Activated naive CD4-positive, alpha-beta T cell treated with anti-CD3 and anti-CD28 coated beads, Interleukin-2, amount 10 ng/mL, durations not matched to agents 7 days and 5 days (primary cell): ENCODE measurements at regions of chr22 and their contacts with region 1.

Region 1: DNA sequence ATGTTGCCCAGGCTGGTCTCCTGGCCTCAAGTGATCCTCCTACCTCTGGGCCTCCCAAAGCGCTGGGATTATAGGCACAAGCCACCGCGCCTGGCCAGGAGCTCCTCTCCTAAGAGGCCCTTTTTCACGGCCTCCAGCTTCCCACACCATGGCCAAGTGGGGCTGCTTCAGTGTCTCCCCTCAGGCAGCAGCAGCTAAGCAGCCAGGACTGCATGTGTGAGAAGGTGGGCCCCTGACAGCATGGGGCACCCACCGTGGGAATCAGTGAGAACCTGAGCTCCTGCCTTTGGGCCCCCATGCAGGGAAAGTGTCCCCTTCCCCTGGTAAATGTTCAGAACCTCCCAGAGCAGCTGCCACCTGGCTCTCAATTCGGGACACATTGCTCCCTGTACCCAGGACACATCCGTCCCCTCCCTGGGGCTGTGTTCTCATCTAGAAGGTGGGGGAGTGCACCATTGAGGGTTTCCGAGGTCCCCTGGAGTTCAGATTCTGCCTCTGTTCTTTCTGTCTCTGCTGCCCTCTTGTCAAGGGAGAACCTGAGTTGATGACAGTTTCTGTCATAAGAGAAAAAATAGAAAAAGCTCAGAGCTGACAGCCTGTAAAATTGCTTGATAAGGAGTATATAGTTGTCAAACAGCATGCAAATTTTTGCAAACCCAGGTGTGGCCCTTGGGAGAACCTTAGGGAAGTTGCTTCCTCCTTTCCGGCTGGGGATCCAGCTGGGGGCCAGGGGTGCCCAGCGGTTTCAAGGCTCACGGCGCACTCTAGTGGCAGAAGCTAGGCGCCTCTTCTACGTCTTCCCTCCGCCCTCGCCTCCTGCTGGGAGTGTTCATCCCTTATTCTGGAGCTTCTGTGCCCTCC is 29.7 kb downstream of the FAM83F start:
- DNase-seq: peak; percentile 78
- H3K4me3 Mint-ChIP-seq: no peak overlapping the region
- H3K27ac Mint-ChIP-seq: no peak overlapping the region
- H3K4me1 Mint-ChIP-seq: no peaks in the 10 kb centered on the region
- H3K27me3 Mint-ChIP-seq: no peaks in the 10 kb centered on the region

Region 2: DNA sequence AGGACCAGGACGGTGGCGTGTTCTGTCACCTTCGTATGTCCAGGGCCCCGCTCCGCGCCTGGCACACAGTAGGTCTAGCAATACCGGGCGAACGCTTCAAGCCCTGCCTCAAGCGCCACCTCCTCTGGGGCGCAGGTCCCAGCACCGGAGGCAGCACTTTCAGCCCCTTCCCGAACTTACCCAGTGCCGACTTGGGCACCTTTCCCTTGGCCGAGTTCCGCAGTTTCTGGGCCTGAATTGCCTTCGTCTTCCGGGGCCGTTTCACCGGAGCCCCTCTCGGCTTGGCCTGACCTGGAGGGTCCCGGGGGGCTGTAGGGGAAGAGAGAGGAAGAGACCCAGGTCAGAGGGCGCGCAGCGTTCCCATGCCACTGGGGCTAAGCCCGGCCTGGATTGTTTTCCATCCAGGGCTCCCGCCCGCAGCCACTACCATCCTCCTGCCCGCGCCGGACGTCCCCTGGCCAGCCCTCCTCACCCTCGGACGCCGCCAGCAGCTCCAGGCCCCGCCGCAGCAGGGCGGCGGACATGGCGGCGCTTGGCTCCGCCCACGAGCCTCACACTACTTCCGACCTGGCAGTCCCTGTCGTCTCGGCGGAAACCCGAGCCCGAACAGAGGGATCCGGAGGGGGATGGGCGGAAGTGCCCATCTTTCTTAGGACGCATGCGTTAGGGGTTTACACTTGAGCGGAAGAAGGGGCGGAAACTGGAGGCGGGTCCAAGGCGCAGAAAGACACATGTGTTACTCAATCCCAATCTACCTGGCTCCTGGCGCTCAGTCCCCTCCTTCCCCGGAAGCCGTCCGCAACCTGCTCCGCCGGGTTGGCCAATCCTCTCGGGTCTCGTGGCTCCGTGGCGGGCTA is 492.0 kb before region 1 on chr22 and contains the start of gene RPS19BP1:
- CTCF ChIA-PET with region 1: interaction called, 86 read pairs
- DNase-seq: peak; percentile 100
- H3K4me3 Mint-ChIP-seq: peak within 1 kb of the TSS; percentile 98
- H3K27ac Mint-ChIP-seq: peak within 1 kb of the TSS; percentile 93
- H3K4me1 Mint-ChIP-seq: peaks cover 64% of the 10 kb centered on the region
- H3K27me3 Mint-ChIP-seq: no peaks in the 10 kb centered on the region

Region 3: DNA sequence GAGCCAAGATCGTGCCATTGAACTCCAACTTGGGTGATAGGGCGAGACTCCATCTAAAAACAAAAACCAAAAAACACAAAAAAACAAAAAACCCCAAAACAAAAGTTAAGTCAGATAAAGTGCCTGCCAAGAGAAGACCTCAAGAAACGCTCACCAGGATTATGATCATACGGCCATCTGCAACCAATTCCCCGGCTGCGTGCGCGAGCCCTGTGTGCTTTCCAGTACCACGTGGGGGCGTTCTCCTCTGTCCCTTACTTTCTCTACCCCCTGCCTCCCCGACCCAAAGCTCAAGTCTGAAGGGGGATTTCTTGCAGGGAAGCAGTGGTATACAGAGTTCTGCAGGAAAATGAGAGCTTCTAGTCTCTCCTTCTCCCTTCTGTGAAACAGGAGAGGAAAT is 481.3 kb before region 1 on chr22:
- CTCF ChIA-PET with region 1: interaction called, 45 read pairs
- DNase-seq: peak; percentile 53
- H3K4me3 Mint-ChIP-seq: no peak overlapping the region
- H3K27ac Mint-ChIP-seq: no peak overlapping the region
- H3K4me1 Mint-ChIP-seq: peaks cover 21% of the 10 kb centered on the region
- H3K27me3 Mint-ChIP-seq: peaks cover 72% of the 10 kb centered on the region

Region 4: DNA sequence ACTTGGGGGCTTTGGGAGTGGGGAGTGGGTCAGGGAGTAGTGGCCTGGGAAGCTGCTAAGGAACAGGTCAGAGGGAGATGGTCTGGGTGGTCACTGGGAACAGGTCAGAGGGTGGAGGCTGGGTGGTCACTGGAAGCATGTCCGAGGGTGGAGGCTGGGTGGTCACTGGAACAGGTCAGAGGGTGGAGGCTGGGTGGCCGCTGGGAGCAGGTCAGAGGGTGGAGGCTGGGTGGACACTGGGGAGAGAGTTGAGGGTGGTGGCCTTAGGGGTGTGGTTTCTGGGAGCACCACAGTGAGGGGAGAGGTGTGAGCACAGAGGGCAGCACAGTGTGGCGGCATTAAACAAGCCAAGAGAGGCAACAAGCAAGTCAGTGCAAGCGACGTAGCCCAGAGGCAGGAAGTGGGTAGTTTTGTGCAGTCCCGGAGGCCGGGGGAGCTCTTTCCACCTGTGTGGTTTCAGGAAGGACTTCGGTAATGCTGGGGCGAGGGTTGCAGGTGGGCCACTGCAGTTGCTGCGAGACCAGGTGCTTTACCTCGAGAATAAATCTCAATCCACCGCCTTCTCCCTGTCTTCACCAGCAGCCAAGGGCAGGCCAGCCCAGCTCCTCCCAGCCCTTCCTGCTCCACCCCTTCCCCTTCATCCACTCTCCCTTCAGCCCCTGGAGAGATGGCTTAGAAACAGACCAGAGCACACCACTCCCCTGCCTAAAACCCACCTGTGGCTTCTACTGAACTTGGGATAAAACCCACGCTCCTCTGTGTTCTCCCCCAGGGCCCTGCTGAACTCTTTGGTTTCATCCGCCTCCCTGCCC is 457.1 kb before region 1 on chr22:
- CTCF ChIA-PET with region 1: interaction called, 12 read pairs
- DNase-seq: peak; percentile 77
- H3K4me3 Mint-ChIP-seq: no peak overlapping the region
- H3K27ac Mint-ChIP-seq: peak overlapping the region; percentile 47
- H3K4me1 Mint-ChIP-seq: peaks cover 19% of the 10 kb centered on the region
- H3K27me3 Mint-ChIP-seq: peaks cover 16% of the 10 kb centered on the region

Region 5: DNA sequence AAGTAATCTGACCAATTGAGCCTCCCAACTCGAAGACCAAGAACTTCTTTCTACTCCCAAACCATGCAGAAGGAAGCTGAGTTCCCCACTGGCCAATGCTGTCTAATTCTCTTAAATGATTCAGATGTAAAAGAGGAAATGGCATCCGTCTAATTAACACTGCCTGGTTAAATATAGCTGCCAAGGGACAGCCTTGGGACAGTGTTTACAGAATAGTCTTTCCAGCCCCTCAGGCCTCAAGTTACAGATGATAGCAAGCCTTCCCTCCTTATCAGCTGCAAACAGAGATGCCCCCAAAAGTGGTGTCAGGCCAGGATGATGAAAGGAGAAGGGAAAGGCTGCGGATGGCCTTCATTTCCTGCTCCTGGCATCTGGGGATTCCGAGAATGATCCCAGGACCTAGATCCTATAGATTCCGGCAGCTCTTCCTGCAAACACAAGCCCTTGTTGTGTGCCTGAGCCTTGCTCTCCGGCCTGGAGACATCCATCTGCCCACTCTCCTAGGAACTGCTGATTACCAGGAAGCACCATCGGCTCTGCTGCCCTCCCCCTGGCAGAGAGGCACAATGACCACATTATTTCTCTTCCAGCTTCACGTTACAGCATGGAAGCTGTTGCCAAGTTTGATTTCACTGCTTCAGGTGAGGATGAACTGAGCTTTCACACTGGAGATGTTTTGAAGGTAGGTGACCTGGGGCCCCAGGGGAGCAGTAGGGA is 77.8 kb before region 1 on chr22:
- CTCF ChIA-PET with region 1: interaction called, 22 read pairs
- DNase-seq: no peak
- H3K4me3 Mint-ChIP-seq: no peak overlapping the region
- H3K27ac Mint-ChIP-seq: peak overlapping the region; percentile 21
- H3K4me1 Mint-ChIP-seq: peaks cover 90% of the 10 kb centered on the region
- H3K27me3 Mint-ChIP-seq: no peaks in the 10 kb centered on the region

Region 6: GRCh38 chr22:40036591-40037225 is 12.3 kb after region 1 on chr22:
- CTCF ChIA-PET with region 1: interaction called, 33 read pairs
- DNase-seq: peak; percentile 71
- H3K4me3 Mint-ChIP-seq: no peak overlapping the region
- H3K27ac Mint-ChIP-seq: no peak overlapping the region
- H3K4me1 Mint-ChIP-seq: peaks cover 5% of the 10 kb centered on the region
- H3K27me3 Mint-ChIP-seq: peaks cover 60% of the 10 kb centered on the region

Region 7: DNA sequence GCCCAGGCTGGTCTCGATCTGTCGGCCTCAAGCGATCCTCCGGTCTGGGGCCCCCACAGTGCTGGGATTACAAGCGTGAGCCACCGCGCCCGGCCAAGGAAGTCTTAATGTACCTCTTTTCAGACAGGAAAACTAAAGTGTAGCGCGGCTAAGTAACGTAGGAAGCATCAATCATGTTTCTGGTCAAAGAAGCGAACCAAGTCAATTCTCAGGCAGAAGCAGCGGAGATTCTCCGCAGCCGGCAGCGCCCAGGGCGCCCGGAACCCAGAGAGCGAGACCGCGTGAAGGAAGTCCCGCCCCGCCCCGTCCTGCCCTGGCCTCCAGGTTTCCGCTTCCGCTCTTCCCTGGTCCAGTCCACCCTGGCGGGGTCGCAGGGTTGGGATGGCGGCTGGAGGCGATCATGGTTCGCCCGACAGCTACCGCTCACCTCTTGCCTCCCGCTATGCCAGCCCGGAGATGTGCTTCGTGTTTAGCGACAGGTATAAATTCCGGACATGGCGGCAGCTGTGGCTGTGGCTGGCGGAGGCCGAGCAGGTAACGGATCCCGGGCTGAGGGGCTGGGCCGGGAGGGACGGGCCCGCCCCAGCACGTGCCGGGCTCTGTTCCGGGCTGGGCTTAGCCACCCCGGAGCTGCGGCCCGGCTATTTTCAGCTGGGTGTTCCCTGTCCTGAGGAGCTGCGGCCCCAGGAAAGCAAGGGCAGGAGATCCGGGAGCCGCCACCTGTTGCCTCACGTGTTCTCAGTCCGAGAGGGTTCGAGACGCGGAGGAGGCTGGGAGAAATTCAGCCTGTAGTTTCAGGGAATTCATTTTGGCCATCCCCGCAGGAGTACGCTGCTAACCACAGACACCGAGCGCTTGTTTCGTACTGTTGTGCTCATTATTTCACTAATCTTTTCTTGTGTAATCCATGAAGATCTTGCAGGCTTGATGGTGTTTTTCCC is 322.0 kb after region 1 on chr22 and contains the start of gene ADSL:
- CTCF ChIA-PET with region 1: interaction called, 13 read pairs
- DNase-seq: peak; percentile 91
- H3K4me3 Mint-ChIP-seq: peak within 1 kb of the TSS; percentile 98
- H3K27ac Mint-ChIP-seq: peak within 1 kb of the TSS; percentile 100
- H3K4me1 Mint-ChIP-seq: peaks cover 56% of the 10 kb centered on the region
- H3K27me3 Mint-ChIP-seq: no peaks in the 10 kb centered on the region